ENCODE measurements at regions of chr10 and their contacts with region 1.

Region 1: GRCh38 chr10:7808686-7809267 is 9.5 kb upstream of the TAF3 start:
- DNase-seq: no peak
- H3K4me3 ChIP-seq: no peak overlapping the region
- H3K27ac ChIP-seq: no peak overlapping the region
- H3K4me1 ChIP-seq: peaks cover 3% of the 10 kb centered on the region
- CTCF ChIP-seq: no peak

Region 2: GRCh38 chr10:7787857-7788638 is 20.7 kb before region 1 on chr10 and contains the starts of genes ATP5F1C and KIN:
- CTCF ChIA-PET with region 1: interaction called, 3 read pairs
- POLR2A ChIA-PET with region 1: interaction called, 11 read pairs
- intact Hi-C with region 1: no loop called
- DNase-seq: peak; percentile 97
- H3K4me3 ChIP-seq: peak within 1 kb of the TSS; percentile 79
- H3K27ac ChIP-seq: peak within 1 kb of the TSS; percentile 35
- H3K4me1 ChIP-seq: peaks cover 20% of the 10 kb centered on the region
- CTCF ChIP-seq: no peak
- total RNA-seq, gene ATP5F1C: 221 and 242 TPM in 2 replicates
- total RNA-seq, gene KIN: 12.0 and 14.3 TPM in 2 replicates

Region 3: DNA sequence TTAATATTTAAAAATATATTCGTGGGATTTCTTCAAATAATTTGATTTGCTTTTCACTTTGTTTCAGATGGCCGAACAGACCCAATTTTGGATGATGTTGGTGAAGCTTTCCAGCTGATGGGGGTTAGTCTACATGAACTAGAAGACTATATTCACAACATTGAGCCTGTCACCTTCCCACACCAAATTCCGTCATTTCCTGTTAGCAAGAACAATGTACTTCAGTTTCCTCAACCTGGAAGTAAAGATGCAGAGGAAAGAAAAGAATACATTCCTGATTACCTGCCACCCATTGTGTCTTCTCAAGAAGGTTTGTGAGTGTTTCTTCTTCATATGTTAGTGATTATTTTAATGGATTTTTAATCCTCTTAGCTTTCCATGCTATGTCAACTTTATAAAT is 15.5 kb after region 1 on chr10:
- CTCF ChIA-PET with region 1: no interaction called
- POLR2A ChIA-PET with region 1: interaction called, 11 read pairs
- intact Hi-C with region 1: no loop called
- DNase-seq: no peak
- H3K4me3 ChIP-seq: no peak overlapping the region
- H3K27ac ChIP-seq: no peak overlapping the region
- H3K4me1 ChIP-seq: peaks cover 10% of the 10 kb centered on the region
- CTCF ChIP-seq: no peak

Region 4: GRCh38 chr10:8088504-8088903 is 279.7 kb after region 1 on chr10:
- CTCF ChIA-PET with region 1: no interaction called
- POLR2A ChIA-PET with region 1: no interaction called
- intact Hi-C with region 1: no loop called
- DNase-seq: no peak
- H3K4me3 ChIP-seq: no peak overlapping the region
- H3K27ac ChIP-seq: no peak overlapping the region
- H3K4me1 ChIP-seq: no peaks in the 10 kb centered on the region
- CTCF ChIP-seq: no peak

Measured in OCI-LY7 (cell line).